ENCODE measurements at regions of chr3 and their contacts with region 1.

Region 1: GRCh38 chr3:66816090-66816761 is 181.9 kb upstream of the KBTBD8 start:
- DNase-seq: peak; percentile 44
- CTCF ChIP-seq: peak; percentile 8

Region 2: DNA sequence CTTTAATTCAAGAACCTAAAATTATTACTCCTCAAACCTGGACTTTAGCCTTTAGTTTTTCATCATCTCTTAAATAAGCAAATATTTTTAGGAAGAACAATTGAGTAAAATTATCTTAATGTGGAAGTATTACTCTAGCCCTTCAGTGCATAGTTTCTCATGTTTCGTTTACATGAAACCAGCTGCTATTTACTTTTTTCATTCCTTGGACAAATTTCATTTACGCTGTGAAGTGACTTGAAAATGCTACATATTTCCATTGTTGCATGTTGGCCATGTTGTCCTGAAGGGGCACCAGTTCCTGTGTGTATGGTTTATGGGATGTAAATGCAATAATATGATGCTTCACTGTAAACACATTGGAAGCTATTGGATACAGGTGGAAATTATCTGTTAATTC is 545.5 kb before region 1 on chr3:
- CTCF ChIA-PET with region 1: interaction called, 10 read pairs
- POLR2A ChIA-PET with region 1: no interaction called
- DNase-seq: no peak
- CTCF ChIP-seq: no peak

Region 3: DNA sequence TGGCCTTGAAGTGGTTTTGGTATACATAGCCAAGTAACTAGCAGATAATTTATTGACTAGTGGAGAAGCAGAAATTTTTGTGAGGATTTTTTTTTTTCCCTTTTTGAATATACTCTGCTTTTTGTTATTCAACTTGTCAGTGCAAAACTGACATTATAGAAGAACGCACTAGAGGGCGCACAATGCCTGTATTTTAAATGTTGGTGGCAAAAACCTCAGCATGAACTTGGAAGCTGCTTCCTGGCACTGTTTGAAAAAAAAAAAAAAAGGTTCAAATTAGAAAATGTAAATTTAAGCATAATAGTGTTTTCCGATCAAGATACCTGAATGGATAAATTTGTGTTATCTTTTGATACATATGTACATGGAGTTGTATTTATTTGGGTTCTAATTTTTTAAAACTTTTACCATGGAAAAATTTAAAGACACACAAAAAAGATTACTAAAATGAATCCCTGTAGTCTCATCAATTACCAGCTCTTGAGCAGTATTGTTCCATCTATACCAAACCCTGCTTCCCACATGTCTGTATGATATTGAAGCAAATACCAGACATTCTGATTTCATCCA is 539.4 kb before region 1 on chr3:
- CTCF ChIA-PET with region 1: interaction called, 26 read pairs
- POLR2A ChIA-PET with region 1: no interaction called
- DNase-seq: no peak
- CTCF ChIP-seq: peak; percentile 68

Region 4: DNA sequence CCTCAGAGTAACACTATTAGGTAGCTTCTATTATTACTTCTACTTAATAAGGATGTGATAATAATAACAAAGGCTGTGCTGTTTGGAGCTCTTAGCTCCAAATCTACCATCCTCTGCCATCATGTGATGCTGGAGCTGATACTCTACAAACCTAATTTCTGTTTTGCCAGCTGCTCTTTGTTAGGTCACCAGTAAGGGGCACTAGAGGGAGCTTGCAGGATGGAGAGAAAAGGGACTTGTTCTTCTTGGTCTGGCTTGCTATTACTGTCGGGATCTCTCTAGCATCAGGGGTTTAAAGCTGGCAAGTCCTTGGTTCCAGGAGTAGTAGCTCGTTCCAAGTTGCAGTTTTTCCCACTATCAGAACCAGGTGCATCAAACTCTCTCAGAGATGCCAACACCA is 13.0 kb before region 1 on chr3:
- CTCF ChIA-PET with region 1: interaction called, 27 read pairs
- POLR2A ChIA-PET with region 1: no interaction called
- DNase-seq: no peak
- CTCF ChIP-seq: no peak

Measured in GM10248 (cell line).